H1 (cell line): ENCODE measurements at regions of chr5 and their contacts with region 1.

Region 1: GRCh38 chr5:170633235-170634081 is 129.6 kb downstream of the KCNIP1 start:
- DNase-seq: no peak
- H3K4me3 ChIP-seq: peak overlapping the region; percentile 51 to 71 (median 60)
- H3K27ac ChIP-seq: peak overlapping the region; percentile 45
- H3K4me1 ChIP-seq: peaks cover 10 to 21% (median 18%) of the 10 kb centered on the region in 4 experiments
- H3K27me3 ChIP-seq: no peaks in the 10 kb centered on the region
- CTCF ChIP-seq: no peak
- EP300 ChIP-seq: no peak
- POLR2A ChIP-seq: peak in 1 of 2 experiments; percentile 16; a peak in 1 of 3 replicates
- RAD21 ChIP-seq: no peak

Region 2: DNA sequence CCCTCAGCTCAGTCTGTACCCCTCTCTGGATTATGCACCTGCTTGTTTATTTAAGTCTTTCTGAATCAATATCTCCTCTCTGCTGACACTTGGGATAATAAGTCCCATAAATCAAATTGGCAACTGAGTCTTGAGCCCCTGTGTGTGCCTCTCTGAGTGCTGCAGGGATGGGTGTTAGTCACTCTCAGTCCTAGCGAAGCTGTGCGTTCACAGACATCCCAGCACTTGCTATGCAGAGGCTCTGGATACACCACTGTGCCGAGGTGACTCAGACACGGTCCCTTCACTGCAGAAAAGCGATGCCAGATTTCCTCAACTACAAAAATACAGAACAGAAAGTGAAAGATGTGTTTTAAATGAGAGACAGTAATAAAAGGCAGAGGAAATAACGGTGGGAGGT is 240.2 kb before region 1 on chr5:
- CTCF ChIA-PET with region 1: no interaction called
- POLR2A ChIA-PET with region 1: no interaction called
- DNase-seq: no peak
- H3K4me3 ChIP-seq: no peak overlapping the region
- H3K27ac ChIP-seq: no peak overlapping the region
- H3K4me1 ChIP-seq: peaks cover 6 to 38% (median 19%) of the 10 kb centered on the region in 4 experiments
- H3K27me3 ChIP-seq: no peaks in the 10 kb centered on the region
- CTCF ChIP-seq: no peak
- EP300 ChIP-seq: no peak
- POLR2A ChIP-seq: no peak
- RAD21 ChIP-seq: no peak

Region 3: DNA sequence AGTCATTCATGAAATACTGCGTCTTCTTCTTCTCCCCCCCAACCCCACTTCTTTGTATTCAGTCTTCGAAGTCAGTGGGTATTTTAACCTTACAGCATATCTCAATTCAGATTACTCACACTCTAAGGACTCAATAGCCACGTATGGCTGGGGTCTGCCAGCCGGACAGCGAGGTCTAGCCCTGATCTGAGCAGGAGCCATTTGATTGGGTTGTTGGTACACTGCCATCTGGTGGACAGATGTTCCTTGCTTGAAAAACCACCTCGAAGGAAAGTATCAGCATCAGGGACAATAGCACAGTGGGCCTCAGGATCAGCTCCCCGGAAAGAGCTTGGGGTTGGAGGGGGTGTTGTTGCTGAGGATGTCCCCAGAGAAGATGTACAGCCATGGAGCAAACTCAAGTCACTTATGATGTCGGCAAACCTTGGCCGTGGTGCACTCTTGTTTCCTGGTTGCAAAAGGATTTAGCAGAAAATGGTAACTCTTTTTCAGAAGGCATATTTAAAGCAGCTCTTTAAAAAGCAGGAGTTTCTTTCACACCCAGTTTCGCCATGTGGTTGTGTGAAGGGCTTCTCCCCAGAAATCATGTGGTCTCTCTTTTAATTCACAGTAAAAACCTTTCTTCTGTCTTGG is 212.6 kb before region 1 on chr5:
- CTCF ChIA-PET with region 1: interaction called, 34 read pairs
- POLR2A ChIA-PET with region 1: no interaction called
- DNase-seq: peak in 1 of 2 experiments; percentile 72
- H3K4me3 ChIP-seq: no peak overlapping the region
- H3K27ac ChIP-seq: no peak overlapping the region
- H3K4me1 ChIP-seq: peaks cover 0 to 2% (median 0%) of the 10 kb centered on the region in 4 experiments; a peak in 2 of 7 replicates
- H3K27me3 ChIP-seq: no peaks in the 10 kb centered on the region
- CTCF ChIP-seq: peak; percentile 51 to 89 (median 87)
- EP300 ChIP-seq: no peak
- POLR2A ChIP-seq: no peak
- RAD21 ChIP-seq: peak; percentile 82 to 85

Region 4: GRCh38 chr5:170587808-170588207 is 45.6 kb before region 1 on chr5:
- CTCF ChIA-PET with region 1: interaction called, 982 read pairs
- POLR2A ChIA-PET with region 1: no interaction called
- DNase-seq: no peak
- H3K4me3 ChIP-seq: no peak overlapping the region
- H3K27ac ChIP-seq: no peak overlapping the region
- H3K4me1 ChIP-seq: no peaks in the 10 kb centered on the region
- H3K27me3 ChIP-seq: no peaks in the 10 kb centered on the region
- CTCF ChIP-seq: no peak
- EP300 ChIP-seq: no peak
- POLR2A ChIP-seq: no peak
- RAD21 ChIP-seq: no peak